Activated CD4-positive, alpha-beta memory T cell treated with anti-CD3 and anti-CD28 coated beads for 36 hours (primary cell): ENCODE measurements at regions of chrX and their contacts with region 1.

Region 1: DNA sequence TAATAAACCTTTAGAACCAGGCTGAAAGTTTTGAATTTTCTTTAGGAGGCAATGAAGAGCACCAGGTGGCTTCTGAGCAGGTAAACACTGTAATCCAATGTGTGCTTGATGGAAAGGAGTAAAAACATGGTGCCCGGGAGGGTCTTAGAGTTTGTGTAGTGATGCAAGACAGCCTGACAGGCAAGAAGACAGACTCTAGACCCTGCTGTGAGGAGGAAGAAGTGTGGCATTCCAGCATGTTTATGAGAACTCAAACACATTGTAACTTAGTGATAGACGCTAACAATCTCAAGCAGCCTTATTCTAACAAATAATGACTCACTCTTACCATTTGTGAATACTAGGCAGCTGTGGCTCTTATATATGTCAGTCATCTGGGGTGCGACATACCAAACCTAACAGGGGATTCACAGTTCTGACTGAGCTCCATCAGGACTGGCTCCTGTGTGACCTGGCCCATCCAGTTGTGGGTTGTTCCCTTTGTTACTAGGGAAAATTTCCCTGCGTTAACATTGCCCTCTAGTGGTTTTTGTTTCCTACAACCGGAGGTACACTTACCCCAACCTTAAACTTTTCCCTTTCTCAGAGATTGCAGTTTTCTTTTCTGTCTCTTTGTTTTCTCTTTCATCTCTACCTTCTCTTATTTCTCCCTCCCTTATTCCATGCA is 53.8 kb downstream of the VSIG4 start:
- DNase-seq: peak; percentile 64
- H3K4me3 Mint-ChIP-seq: no peak overlapping the region
- H3K27ac Mint-ChIP-seq: peak overlapping the region; percentile 62
- H3K4me1 Mint-ChIP-seq: peaks cover 16% of the 10 kb centered on the region
- H3K27me3 Mint-ChIP-seq: no peaks in the 10 kb centered on the region

Region 2: DNA sequence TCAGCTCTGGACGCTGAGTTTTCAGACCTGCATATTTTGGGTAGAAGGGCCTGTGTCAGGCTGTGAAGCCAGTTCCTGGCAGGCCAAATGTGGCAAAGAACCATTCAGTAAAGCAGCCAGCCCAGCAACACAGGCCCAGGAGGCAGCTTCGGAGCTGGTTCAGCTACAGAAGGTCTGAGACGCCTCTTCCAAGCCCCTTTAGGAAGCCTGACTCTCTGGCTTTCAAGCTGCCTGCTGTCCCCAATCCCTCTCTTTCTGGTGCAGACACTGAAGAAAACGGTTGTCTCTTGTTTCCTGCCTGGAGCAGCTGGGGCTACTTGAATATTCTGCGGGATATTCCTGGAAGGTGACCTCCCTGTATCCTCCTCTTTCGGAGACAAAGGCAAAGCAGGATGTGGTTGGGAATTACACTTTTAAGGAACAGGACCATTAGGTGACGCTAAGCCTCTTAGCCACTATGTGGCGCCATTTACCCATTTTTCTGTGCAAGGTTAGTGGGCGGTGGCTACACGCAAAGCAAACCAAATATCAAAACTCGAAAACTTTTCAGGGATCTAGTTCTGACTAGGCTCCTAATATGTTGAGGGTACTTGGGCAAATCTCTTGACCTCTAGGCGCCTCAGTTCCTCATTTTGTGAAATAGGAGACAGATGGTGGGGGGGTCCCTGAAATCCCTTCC is 404.3 kb before region 1 on chrX:
- CTCF ChIA-PET with region 1: interaction called, 13 read pairs
- POLR2A ChIA-PET with region 1: no interaction called
- intact Hi-C with region 1: loop called (anchors 1 kb)
- DNase-seq: peak; percentile 63
- H3K4me3 Mint-ChIP-seq: no peak overlapping the region
- H3K27ac Mint-ChIP-seq: no peak overlapping the region
- H3K4me1 Mint-ChIP-seq: peaks cover 3% of the 10 kb centered on the region
- H3K27me3 Mint-ChIP-seq: no peaks in the 10 kb centered on the region

Region 3: DNA sequence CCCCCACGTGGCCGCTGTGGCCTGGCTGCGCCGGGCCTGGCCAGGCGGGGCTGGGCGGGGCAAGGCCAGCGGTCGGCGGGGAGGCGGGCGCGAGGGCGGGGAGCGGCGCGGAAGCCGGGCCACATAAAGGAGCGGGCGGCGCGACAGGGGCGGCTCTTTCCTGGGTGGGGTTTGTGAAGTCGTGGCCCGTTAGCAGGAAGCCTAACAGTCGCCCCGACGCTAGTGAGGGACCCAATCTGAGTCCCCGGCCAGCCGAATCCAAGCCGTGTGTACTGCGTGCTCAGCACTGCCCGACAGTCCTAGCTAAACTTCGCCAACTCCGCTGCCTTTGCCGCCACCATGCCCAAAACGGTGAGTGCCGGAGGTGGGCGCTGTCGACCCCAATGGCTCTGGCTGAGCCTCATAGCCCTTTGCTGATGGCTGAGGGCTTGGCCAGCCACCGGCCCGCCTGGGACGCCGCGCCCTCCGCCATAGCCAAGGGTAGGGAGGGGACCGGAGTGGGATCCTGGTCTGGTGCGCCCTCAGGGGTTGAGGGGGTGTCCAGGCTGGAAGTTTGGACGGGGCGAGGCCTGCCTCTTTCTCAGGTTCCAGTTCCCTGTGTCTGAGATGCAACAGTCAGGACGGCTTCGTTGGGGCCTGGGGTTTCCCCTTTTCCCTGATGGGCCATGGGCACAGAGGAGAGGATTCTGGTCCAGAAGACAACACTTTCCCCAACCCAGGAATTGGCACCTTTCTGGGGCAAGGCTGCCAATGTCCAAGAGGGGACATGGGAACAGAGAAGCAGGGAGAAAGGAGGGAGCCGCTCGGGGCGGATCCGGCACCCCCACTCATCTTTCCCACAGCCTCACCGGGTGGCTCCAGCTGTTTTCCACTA is 318.3 kb before region 1 on chrX and contains the start of gene MSN:
- CTCF ChIA-PET with region 1: interaction called, 3 read pairs
- POLR2A ChIA-PET with region 1: no interaction called
- intact Hi-C with region 1: loop called (anchors 2 kb)
- DNase-seq: peak; percentile 86
- H3K4me3 Mint-ChIP-seq: peak within 1 kb of the TSS; percentile 93
- H3K27ac Mint-ChIP-seq: peak within 1 kb of the TSS; percentile 97
- H3K4me1 Mint-ChIP-seq: peaks cover 29% of the 10 kb centered on the region
- H3K27me3 Mint-ChIP-seq: no peaks in the 10 kb centered on the region
- total RNA-seq, gene MSN: 494 to 502 TPM

Region 4: GRCh38 chrX:65744965-65745364 is 241.1 kb before region 1 on chrX:
- CTCF ChIA-PET with region 1: interaction called, 4 read pairs
- POLR2A ChIA-PET with region 1: no interaction called
- intact Hi-C with region 1: loop called (anchors 1 kb)
- DNase-seq: no peak
- H3K4me3 Mint-ChIP-seq: no peak overlapping the region
- H3K27ac Mint-ChIP-seq: no peak overlapping the region
- H3K4me1 Mint-ChIP-seq: peaks cover 64% of the 10 kb centered on the region
- H3K27me3 Mint-ChIP-seq: no peaks in the 10 kb centered on the region

Region 5: GRCh38 chrX:65750674-65751469 is 235.2 kb before region 1 on chrX:
- CTCF ChIA-PET with region 1: interaction called, 7 read pairs
- POLR2A ChIA-PET with region 1: no interaction called
- intact Hi-C with region 1: loop called (anchors 1 kb)
- DNase-seq: peak; percentile 53
- H3K4me3 Mint-ChIP-seq: no peak overlapping the region
- H3K27ac Mint-ChIP-seq: peak overlapping the region; percentile 58
- H3K4me1 Mint-ChIP-seq: peaks cover 64% of the 10 kb centered on the region
- H3K27me3 Mint-ChIP-seq: no peaks in the 10 kb centered on the region

Region 6: DNA sequence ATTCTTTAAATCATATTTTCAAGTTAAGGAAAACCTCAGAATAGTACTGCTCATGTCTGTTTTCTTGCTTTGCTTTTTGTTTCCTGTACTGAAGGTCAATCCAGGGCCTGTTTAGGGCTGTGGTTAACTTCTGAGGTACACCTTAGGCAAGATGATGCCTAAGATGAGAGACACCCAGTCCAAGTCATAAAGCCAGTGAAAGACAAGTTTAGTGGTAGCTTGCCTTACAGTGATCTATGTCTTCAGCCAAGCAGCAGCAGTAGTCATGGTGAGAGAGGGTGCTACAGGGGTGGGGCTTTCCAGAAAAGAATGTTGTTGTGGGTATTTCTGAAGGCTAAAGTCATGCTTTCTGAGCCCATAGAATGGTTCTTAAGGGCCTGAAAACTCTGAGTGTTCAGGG is 119.9 kb before region 1 on chrX:
- CTCF ChIA-PET with region 1: no interaction called
- POLR2A ChIA-PET with region 1: no interaction called
- intact Hi-C with region 1: loop called (anchors 2 kb)
- DNase-seq: peak; percentile 56
- H3K4me3 Mint-ChIP-seq: no peak overlapping the region
- H3K27ac Mint-ChIP-seq: peak overlapping the region; percentile 51
- H3K4me1 Mint-ChIP-seq: peaks cover 33% of the 10 kb centered on the region
- H3K27me3 Mint-ChIP-seq: no peaks in the 10 kb centered on the region